Thyroid gland (tissue), 4 donors: ENCODE measurements at regions of chr6 and their contacts with region 1.

Region 1: DNA sequence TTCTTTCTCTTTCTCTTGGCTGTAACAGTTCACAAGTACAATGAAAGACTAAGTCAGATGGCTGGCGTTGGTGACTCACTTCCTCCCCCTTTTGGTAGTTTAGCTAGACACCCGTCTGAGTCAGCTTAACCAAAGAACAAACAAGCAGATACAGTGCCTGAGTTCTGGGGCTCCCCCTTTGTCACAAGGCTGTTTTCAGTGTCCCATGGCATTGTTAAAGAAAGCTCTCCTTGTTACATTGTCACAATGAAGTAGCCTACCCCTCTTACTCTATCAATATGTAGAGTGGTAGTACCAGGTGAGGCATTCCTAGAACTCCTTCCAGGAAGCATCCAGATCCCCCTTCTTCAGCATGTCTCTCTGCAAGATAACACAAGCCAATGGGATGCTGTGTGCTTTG is 38.6 kb downstream of the KIAA0408 start:
- DNase-seq: peak; percentile 48 to 58
- H3K4me3 ChIP-seq: no peak overlapping the region
- H3K27ac ChIP-seq: no peak overlapping the region
- H3K4me1 ChIP-seq: no peaks in the 10 kb centered on the region
- H3K27me3 ChIP-seq: no peaks in the 10 kb centered on the region
- CTCF ChIP-seq: peak in 5 of 6 experiments; percentile 28 to 63 (median 44)
- POLR2A ChIP-seq: no peak

Region 2: GRCh38 chr6:127022302-127022701 is 398.3 kb before region 1 on chr6:
- intact Hi-C with region 1: no loop called
- DNase-seq: peak; percentile 37 to 63
- H3K4me3 ChIP-seq: no peak overlapping the region
- H3K27ac ChIP-seq: no peak overlapping the region
- H3K4me1 ChIP-seq: no peaks in the 10 kb centered on the region
- H3K27me3 ChIP-seq: no peaks in the 10 kb centered on the region
- CTCF ChIP-seq: no peak
- POLR2A ChIP-seq: no peak

Region 3: DNA sequence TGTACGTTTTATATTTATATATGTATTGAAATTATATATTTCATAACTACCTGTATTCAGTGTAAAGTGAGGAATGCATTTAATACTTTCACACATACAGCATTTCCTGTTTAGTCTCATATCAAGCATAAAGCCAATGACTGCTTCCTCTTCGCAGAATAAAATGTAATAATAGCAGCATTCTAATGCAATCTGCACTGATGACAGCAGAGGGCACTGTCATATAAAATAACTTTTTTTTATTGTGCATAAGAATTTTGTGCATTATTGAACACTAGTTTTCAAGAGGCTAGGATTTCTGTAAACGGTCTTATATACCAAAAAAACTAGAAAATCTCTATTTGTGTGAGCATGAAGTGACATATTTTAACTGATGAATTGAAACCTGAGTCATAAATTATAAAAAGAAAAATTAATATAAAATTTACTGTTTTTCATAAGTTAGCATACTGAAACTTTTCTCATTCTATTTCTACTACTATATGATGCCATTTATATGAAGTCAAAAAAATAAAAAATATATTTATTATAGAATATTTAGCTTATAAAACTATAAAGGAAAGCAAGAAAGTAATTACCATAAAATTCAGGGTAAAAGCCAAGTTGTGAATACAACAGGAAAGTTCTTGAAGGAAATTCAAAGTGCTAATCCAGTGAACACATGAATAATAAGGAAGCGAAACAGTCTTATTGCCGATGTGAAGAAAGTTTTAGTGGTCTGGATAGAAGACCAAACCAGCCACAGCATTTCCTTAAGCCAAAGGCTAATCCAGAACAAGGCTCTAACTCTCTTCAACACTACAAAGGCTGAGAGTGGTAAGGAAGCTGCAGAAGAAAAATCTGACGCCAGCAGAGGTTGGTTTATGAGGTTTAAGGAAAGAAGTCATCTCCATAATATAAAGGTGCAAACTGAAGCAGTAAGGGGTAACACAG is 117.6 kb before region 1 on chr6:
- intact Hi-C with region 1: loop called (anchors 10 kb)
- DNase-seq: peak; percentile 22 to 37
- H3K4me3 ChIP-seq: no peak overlapping the region
- H3K27ac ChIP-seq: no peak overlapping the region
- H3K4me1 ChIP-seq: peaks cover 23% of the 10 kb centered on the region in 2 donors
- H3K27me3 ChIP-seq: no peaks in the 10 kb centered on the region
- CTCF ChIP-seq: peak in 5 of 6 experiments; percentile 20 to 78 (median 70)
- POLR2A ChIP-seq: no peak

Region 4: GRCh38 chr6:127366281-127367022 is 54.1 kb before region 1 on chr6:
- intact Hi-C with region 1: no loop called
- DNase-seq: no peak
- H3K4me3 ChIP-seq: no peak overlapping the region
- H3K27ac ChIP-seq: no peak overlapping the region
- H3K4me1 ChIP-seq: no peaks in the 10 kb centered on the region
- H3K27me3 ChIP-seq: no peaks in the 10 kb centered on the region
- CTCF ChIP-seq: no peak
- POLR2A ChIP-seq: no peak

Region 5: DNA sequence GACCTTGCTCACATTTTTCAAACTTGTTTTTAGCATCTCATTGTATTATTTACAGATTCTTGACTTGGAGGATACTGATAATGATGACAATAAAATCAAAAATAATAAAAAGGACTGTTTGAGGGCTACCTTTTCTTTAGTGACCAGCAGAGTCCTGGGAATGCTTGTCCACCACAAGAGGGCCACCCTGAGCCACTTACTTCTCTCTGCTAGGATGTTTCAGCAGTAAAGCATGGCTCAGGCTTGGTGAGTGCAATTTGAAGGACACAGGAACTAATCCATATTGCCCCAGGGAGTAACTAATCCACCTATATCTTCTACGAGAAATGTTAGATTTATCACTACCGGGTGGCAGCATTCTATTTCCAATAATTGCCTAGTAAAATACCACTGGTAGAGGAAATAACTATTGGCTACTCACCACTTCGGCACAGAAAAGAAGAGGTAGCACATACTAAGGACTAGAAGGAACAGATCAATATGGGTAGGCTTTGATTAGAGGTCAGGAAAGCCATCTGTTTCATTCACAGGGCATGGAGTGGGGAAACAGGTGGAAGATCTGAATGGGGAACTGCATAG is 44.4 kb after region 1 on chr6:
- intact Hi-C with region 1: no loop called
- DNase-seq: peak; percentile 67 to 68
- H3K4me3 ChIP-seq: no peak overlapping the region
- H3K27ac ChIP-seq: peak overlapping the region in 1 of 3 donors; percentile 20
- H3K4me1 ChIP-seq: peaks cover 0 to 7% of the 10 kb centered on the region in 2 donors
- H3K27me3 ChIP-seq: no peaks in the 10 kb centered on the region
- CTCF ChIP-seq: peak; percentile 50 to 84 (median 64)
- POLR2A ChIP-seq: no peak